A673 (cell line): ENCODE measurements at regions of chr2 and their contacts with region 1.

Region 1: DNA sequence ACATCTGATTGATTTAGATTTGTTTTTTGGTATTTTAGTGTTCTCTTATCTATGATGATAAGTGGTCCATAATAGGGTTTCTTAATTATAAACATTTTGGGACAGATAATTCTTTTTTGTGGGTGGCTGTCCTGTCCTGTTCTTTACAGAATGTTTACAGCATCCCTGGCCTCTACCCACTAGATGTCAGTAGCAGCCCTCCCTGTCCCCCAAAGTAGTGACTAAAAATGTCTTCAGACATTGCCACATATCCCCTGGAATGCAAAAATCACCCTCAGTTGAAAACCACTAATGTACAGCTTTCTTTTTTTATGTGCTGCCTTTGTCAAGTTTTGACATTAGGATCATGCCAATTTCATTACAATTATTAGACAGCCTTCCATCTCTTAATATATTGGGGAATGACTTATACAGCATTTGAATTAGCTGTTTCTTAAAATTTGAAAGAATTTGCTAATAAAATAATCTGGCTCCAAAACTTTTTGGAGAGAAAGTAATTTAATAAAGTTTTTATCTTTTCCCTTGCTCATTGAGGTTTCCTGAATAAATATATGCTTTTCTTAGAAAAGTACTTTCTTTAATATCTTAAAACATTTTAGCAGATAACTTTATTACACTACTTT is 19.5 kb downstream of the WIPF1 start:
- DNase-seq: peak; percentile 56
- H3K4me3 ChIP-seq: no peak overlapping the region
- H3K27ac ChIP-seq: no peak overlapping the region
- H3K4me1 ChIP-seq: no peaks in the 10 kb centered on the region
- H3K27me3 ChIP-seq: no peaks in the 10 kb centered on the region
- CTCF ChIP-seq: peak; percentile 70

Region 2: DNA sequence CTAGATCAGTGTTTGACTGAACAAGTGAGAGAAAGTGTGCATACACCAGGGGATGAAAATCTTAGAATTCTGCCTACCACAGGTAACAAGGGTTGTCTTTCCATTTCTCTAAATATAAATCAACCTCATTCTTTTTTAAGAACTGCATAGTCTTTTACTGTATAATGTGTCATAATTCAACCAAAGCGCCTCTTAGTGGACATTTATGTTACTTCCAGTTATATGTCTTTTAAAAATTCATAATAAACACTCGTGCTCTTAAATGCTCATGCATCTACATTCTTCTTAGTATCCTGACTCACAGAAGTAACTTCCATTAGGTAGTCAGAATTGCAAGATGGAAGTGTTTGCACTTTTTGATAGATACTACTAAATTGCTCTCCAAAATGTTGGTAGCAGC is 110.0 kb after region 1 on chr2:
- CTCF ChIA-PET with region 1: interaction called, 8 read pairs
- POLR2A ChIA-PET with region 1: no interaction called
- intact Hi-C with region 1: loop called (anchors 2 kb)
- DNase-seq: peak; percentile 37
- H3K4me3 ChIP-seq: no peak overlapping the region
- H3K27ac ChIP-seq: no peak overlapping the region
- H3K4me1 ChIP-seq: peaks cover 3% of the 10 kb centered on the region
- H3K27me3 ChIP-seq: peaks cover 36% of the 10 kb centered on the region
- CTCF ChIP-seq: peak; percentile 65

Region 3: DNA sequence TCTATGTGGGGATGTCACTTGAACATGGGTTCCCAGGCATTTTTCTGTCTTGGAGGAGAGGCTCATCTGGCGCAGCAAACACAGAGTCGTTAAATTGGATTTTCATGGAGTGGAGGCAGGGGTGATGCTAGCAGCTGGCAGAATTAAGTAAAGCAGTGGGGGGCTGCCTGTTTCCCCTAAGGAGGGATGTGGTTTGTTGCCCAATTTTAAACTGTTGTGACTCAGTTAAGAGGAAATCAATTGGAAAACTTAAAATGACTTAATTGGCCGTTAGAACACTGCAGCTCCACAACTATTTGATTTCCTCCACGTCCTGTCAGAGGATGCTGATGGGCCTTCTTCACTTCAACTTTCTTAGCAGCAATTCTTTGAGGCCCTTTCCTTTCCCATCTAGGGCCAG is 957.6 kb after region 1 on chr2:
- CTCF ChIA-PET with region 1: no interaction called
- POLR2A ChIA-PET with region 1: no interaction called
- intact Hi-C with region 1: no loop called
- DNase-seq: peak; percentile 90
- H3K4me3 ChIP-seq: no peak overlapping the region
- H3K27ac ChIP-seq: no peak overlapping the region
- H3K4me1 ChIP-seq: peaks cover 12% of the 10 kb centered on the region
- H3K27me3 ChIP-seq: no peaks in the 10 kb centered on the region
- CTCF ChIP-seq: no peak